Naive thymus-derived CD4-positive, alpha-beta T cell (primary cell): ENCODE measurements at regions of chr1 and their contacts with region 1.

Region 1: GRCh38 chr1:228059634-228060457 is 22.7 kb upstream of the ARF1 start:
- DNase-seq: peak in 6 of 9 donors; percentile 42 to 76 (median 52)
- ATAC-seq: peak; percentile 73
- H3K4me3 ChIP-seq: peak overlapping the region; percentile 48
- H3K4me3 Mint-ChIP-seq: peak overlapping the region; percentile 58 to 82 (median 66)
- H3K27ac ChIP-seq: no peak overlapping the region
- H3K27ac Mint-ChIP-seq: peak overlapping the region in 4 of 9 donors; percentile 51 to 70 (median 60)
- H3K4me1 ChIP-seq: peaks cover 5 to 19% of the 10 kb centered on the region in 2 donors
- H3K4me1 Mint-ChIP-seq: peaks cover 6 to 15% (median 7%) of the 10 kb centered on the region in 7 donors
- H3K27me3 ChIP-seq: peaks cover 9 to 30% of the 10 kb centered on the region in 2 donors
- H3K27me3 Mint-ChIP-seq: peaks cover 21 to 50% (median 38%) of the 10 kb centered on the region in 5 donors

Region 2: GRCh38 chr1:227808566-227808965 is 251.3 kb before region 1 on chr1:
- CTCF ChIA-PET with region 1: no interaction called
- POLR2A ChIA-PET with region 1: no interaction called
- intact Hi-C with region 1: no loop called
- DNase-seq: no peak
- ATAC-seq: no peak
- H3K4me3 ChIP-seq: no peak overlapping the region
- H3K4me3 Mint-ChIP-seq: no peak overlapping the region
- H3K27ac ChIP-seq: no peak overlapping the region
- H3K27ac Mint-ChIP-seq: no peak overlapping the region
- H3K4me1 ChIP-seq: peaks cover 0 to 4% of the 10 kb centered on the region in 2 donors
- H3K4me1 Mint-ChIP-seq: peaks cover 0 to 10% (median 6%) of the 10 kb centered on the region in 7 donors
- H3K27me3 ChIP-seq: no peaks in the 10 kb centered on the region
- H3K27me3 Mint-ChIP-seq: peaks cover 0 to 19% (median 14%) of the 10 kb centered on the region in 5 donors

Region 3: DNA sequence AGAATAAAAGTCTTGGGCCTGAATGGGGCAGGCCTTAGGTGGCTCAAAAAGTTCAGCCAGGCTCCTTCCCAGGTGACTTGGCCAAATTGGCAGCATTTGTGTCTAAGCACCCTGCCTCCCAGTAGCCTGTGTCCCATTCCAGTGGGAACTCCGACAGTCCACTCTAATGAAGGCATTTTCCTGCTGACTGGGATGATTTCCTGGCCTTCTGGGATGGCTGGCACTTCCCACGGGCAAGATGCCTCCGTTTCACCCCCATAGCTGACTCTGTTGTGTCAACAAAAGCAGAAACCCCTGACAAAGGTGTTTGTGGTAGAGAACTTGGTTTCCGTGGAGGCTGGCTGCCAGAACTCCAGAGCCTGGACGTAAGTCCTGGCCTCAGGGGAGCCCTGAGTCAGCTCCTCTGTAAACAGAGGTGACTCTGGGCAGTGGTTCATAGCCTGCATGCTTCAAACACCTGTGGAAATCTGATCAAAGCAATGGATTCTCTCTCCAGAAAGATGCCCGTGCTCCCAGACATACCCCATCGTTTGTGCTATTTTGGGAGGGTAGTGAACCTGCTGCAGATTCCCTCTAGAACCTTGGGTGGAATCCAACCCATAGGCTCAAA is 16.5 kb before region 1 on chr1:
- CTCF ChIA-PET with region 1: no interaction called
- POLR2A ChIA-PET with region 1: no interaction called
- intact Hi-C with region 1: no loop called
- DNase-seq: no peak
- ATAC-seq: no peak
- H3K4me3 ChIP-seq: no peak overlapping the region
- H3K4me3 Mint-ChIP-seq: no peak overlapping the region
- H3K27ac ChIP-seq: no peak overlapping the region
- H3K27ac Mint-ChIP-seq: no peak overlapping the region
- H3K4me1 ChIP-seq: no peaks in the 10 kb centered on the region
- H3K4me1 Mint-ChIP-seq: peaks cover 0 to 8% (median 0%) of the 10 kb centered on the region in 7 donors
- H3K27me3 ChIP-seq: peaks cover 0 to 3% of the 10 kb centered on the region in 2 donors
- H3K27me3 Mint-ChIP-seq: peaks cover 0 to 14% (median 13%) of the 10 kb centered on the region in 5 donors

Region 4: DNA sequence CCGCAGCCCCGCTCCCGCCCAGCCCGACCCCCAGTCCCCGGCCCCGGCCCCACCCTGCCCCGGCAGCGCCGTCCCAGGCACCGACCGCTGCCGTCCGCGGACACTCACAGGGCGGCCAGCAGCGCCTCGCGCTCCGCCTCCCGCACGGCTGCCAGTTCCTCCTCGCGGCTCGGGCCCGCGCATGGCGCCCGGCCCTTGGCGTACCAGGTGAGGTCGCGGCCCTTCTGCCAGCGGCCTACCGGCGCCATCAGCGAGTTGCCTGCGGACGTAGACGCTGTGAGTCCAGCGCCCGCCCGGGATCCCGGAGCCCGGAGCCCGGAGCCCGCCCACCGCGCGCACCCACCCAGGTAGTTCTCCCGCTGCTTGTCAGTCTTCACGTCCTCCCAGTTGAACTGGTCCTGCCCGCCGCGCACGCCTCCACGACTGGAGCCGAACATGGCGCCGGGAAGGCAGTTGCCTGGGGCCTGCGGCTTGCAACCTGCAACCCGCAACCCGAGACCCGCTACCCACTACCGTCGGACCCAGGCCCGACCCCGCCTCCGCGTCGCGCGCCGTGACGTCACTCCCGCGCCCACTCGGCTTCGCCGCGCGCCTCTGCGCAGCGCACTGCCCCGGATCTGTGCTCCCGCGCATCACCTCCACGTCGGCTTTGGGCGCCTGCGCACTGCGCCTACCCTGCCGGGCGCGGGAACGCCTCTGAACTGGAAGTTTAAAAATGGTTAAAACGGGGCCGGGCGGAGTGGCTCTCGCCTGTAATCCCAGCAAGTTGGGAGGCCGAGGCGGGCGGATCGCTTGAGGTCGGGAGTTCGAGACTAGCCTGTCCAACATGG is 43.2 kb after region 1 on chr1 and contains the start of gene C1orf35:
- CTCF ChIA-PET with region 1: no interaction called
- POLR2A ChIA-PET with region 1: no interaction called
- intact Hi-C with region 1: loop called (anchors 1 to 2 kb)
- DNase-seq: peak; percentile 90 to 97 (median 93)
- ATAC-seq: peak; percentile 85
- H3K4me3 ChIP-seq: peak within 1 kb of the TSS; percentile 95
- H3K4me3 Mint-ChIP-seq: peak within 1 kb of the TSS; percentile 91 to 97 (median 93)
- H3K27ac ChIP-seq: peak within 1 kb of the TSS; percentile 94
- H3K27ac Mint-ChIP-seq: peak within 1 kb of the TSS; percentile 90 to 95 (median 94)
- H3K4me1 ChIP-seq: peaks cover 17 to 20% of the 10 kb centered on the region in 2 donors
- H3K4me1 Mint-ChIP-seq: peaks cover 6 to 43% (median 23%) of the 10 kb centered on the region in 7 donors
- H3K27me3 ChIP-seq: no peaks in the 10 kb centered on the region
- H3K27me3 Mint-ChIP-seq: no peaks in the 10 kb centered on the region
- total RNA-seq, gene C1orf35: 16.8 to 31.8 (median 27.8) TPM

Region 5: GRCh38 chr1:228109073-228109961 is 49.5 kb after region 1 on chr1 and contains the start of gene MRPL55:
- CTCF ChIA-PET with region 1: no interaction called
- POLR2A ChIA-PET with region 1: no interaction called
- intact Hi-C with region 1: loop called in 1 of 2 experiments (anchors 2 kb)
- DNase-seq: peak; percentile 97 to 100 (median 99)
- ATAC-seq: peak; percentile 99
- H3K4me3 ChIP-seq: peak within 1 kb of the TSS; percentile 100
- H3K4me3 Mint-ChIP-seq: peak within 1 kb of the TSS; percentile 87 to 95 (median 93)
- H3K27ac ChIP-seq: peak within 1 kb of the TSS; percentile 94
- H3K27ac Mint-ChIP-seq: peak within 1 kb of the TSS; percentile 88 to 98 (median 95)
- H3K4me1 ChIP-seq: peaks cover 9 to 16% of the 10 kb centered on the region in 2 donors
- H3K4me1 Mint-ChIP-seq: peaks cover 5 to 37% (median 26%) of the 10 kb centered on the region in 7 donors
- H3K27me3 ChIP-seq: no peaks in the 10 kb centered on the region
- H3K27me3 Mint-ChIP-seq: peaks cover 0 to 3% (median 0%) of the 10 kb centered on the region in 5 donors
- total RNA-seq, gene MRPL55: 34.3 to 79.3 (median 65.2) TPM